ENCODE measurements at regions of chr20 and their contacts with region 1.

Region 1: DNA sequence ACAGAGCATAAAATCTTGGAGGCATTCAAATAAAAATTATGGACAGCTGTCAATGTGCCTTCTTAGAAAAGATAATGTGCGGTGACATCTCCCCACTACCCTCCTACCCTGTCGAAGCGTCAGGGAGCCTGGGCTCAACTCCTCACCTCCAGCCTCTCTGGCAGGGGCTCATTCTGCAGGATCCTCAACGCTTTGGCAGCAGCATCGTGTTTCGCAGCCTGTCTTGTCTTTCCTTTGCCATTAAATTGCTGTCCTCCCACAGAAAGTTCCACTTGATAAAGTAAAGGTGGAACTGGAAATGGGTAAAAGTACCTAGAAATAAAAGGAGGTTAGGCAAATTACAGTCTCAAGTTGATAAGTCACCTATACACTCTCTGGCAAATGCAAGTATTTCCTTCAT is 36.7 kb downstream of the STAU1 start:
- DNase-seq: no peak
- ATAC-seq: no peak
- H3K4me3 ChIP-seq: no peak overlapping the region
- H3K27ac ChIP-seq: no peak overlapping the region
- H3K4me1 ChIP-seq: no peaks in the 10 kb centered on the region
- H3K27me3 ChIP-seq: no peaks in the 10 kb centered on the region
- CTCF ChIP-seq: no peak

Region 2: DNA sequence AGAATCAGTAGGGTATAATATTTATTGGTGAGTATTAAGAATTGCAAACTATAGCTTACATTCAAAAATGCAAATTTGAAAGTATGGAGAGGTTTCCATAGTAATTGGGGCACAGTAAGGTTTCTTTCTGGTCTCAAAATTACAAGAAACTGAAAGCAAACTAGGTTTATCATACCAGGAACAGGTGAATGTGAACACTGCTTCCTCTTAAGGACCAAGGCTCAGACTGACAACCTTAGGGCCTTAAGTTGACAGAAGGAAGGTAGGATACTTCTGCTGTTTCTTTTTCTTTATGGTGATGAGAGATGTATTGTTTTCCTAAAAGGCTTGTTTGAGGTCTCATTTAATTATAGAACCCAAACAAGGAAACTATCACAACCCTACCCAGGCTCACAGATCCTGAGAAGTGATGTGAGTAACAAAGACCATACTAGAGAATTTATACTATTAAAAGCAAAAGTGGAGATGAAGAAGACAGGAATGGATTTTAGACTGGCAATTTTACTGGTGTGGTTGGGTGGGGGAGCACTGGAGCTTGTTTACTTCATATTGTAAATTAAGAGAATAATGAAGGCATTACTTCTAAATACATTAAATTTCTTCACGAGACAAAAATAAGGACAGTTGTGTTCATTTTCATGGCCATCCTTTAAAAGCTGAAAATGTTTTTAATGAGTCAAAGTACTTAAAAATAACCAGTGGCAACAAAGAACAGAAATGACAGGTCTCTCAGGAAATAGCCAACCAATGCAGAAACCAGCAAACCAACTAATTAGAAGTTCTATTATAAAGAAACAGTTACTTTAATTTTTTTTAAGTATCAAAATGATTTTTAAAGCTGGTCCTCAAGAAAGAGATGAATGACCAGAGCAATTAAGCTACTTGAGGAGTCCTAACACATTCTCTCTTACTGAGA is 15.4 kb after region 1 on chr20:
- intact Hi-C with region 1: loop called in 1 of 10 experiments (anchors 2 kb)
- DNase-seq: no peak
- ATAC-seq: no peak
- H3K4me3 ChIP-seq: peak overlapping the region in 1 of 10 donors; percentile 13
- H3K27ac ChIP-seq: peak overlapping the region in 5 of 10 donors; percentile 2 to 70 (median 52)
- H3K4me1 ChIP-seq: peaks cover 0 to 39% (median 29%) of the 10 kb centered on the region in 9 donors
- H3K27me3 ChIP-seq: no peaks in the 10 kb centered on the region
- CTCF ChIP-seq: no peak

Region 3: GRCh38 chr20:49281059-49281912 is 129.8 kb after region 1 on chr20:
- intact Hi-C with region 1: no loop called
- DNase-seq: no peak
- ATAC-seq: no peak
- H3K4me3 ChIP-seq: peak overlapping the region in 3 of 10 donors; percentile 1 to 82 (median 71)
- H3K27ac ChIP-seq: peak overlapping the region in 2 of 10 donors; percentile 0 to 98
- H3K4me1 ChIP-seq: peaks cover 2 to 72% (median 53%) of the 10 kb centered on the region in 9 donors
- H3K27me3 ChIP-seq: no peaks in the 10 kb centered on the region
- CTCF ChIP-seq: no peak